Activated CD4-positive, alpha-beta T cell treated with anti-CD3 and anti-CD28 coated beads, Interleukin-2, amount 10 ng/mL, durations not matched to agents 24 days and 14 days (primary cell): ENCODE measurements at regions of chr1 and their contacts with region 1.

Region 1: GRCh38 chr1:221435504-221435904 is 306.4 kb downstream of the DUSP10 start:
- DNase-seq: peak; percentile 67
- H3K4me3 Mint-ChIP-seq: no peak overlapping the region
- H3K27ac Mint-ChIP-seq: no peak overlapping the region
- H3K4me1 Mint-ChIP-seq: peaks cover 22% of the 10 kb centered on the region
- H3K27me3 Mint-ChIP-seq: peaks cover 11% of the 10 kb centered on the region

Region 2: GRCh38 chr1:220810179-220810653 is 625.3 kb before region 1 on chr1:
- intact Hi-C with region 1: loop called (anchors 1 kb)
- DNase-seq: peak; percentile 89
- H3K4me3 Mint-ChIP-seq: peak overlapping the region; percentile 61
- H3K27ac Mint-ChIP-seq: no peak overlapping the region
- H3K4me1 Mint-ChIP-seq: peaks cover 4% of the 10 kb centered on the region
- H3K27me3 Mint-ChIP-seq: no peaks in the 10 kb centered on the region

Region 3: GRCh38 chr1:220879076-220879508 is 556.4 kb before region 1 on chr1 and contains the start of gene HLX:
- intact Hi-C with region 1: loop called (anchors 2 kb)
- DNase-seq: peak; percentile 81
- H3K4me3 Mint-ChIP-seq: peak within 1 kb of the TSS; percentile 90
- H3K27ac Mint-ChIP-seq: peak within 1 kb of the TSS; percentile 88
- H3K4me1 Mint-ChIP-seq: peaks cover 26% of the 10 kb centered on the region
- H3K27me3 Mint-ChIP-seq: peaks cover 74% of the 10 kb centered on the region
- total RNA-seq, gene HLX: 5.7 and 7.2 TPM in 2 replicates

Region 4: GRCh38 chr1:221263831-221264767 is 171.4 kb before region 1 on chr1:
- intact Hi-C with region 1: loop called (anchors 2 kb)
- DNase-seq: peak; percentile 79
- H3K4me3 Mint-ChIP-seq: no peak overlapping the region
- H3K27ac Mint-ChIP-seq: no peak overlapping the region
- H3K4me1 Mint-ChIP-seq: no peaks in the 10 kb centered on the region
- H3K27me3 Mint-ChIP-seq: peaks cover 2% of the 10 kb centered on the region

Region 5: GRCh38 chr1:221517961-221518360 is 82.5 kb after region 1 on chr1:
- intact Hi-C with region 1: no loop called
- DNase-seq: peak; percentile 11
- H3K4me3 Mint-ChIP-seq: no peak overlapping the region
- H3K27ac Mint-ChIP-seq: no peak overlapping the region
- H3K4me1 Mint-ChIP-seq: peaks cover 7% of the 10 kb centered on the region
- H3K27me3 Mint-ChIP-seq: peaks cover 4% of the 10 kb centered on the region

Region 6: DNA sequence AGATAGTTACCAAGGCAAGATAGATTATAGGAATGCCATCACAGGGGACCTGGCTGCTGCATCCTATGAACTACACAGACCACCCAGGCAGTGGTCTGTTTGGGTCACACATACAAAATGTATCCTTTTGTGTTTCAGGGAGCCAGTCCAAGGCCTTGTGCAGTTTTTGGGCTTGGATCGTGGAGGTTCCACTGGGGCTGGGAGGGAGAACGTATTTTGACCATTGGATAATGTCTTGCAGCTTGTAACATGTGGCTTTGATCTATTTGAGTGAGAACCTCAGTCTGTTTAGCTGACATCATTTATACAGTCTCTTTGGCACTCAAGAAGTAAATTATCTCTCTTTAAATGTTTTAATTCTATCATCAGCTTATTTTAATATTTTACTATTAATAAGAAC is 159.1 kb after region 1 on chr1:
- intact Hi-C with region 1: no loop called
- DNase-seq: no peak
- H3K4me3 Mint-ChIP-seq: no peak overlapping the region
- H3K27ac Mint-ChIP-seq: no peak overlapping the region
- H3K4me1 Mint-ChIP-seq: no peaks in the 10 kb centered on the region
- H3K27me3 Mint-ChIP-seq: peaks cover 1% of the 10 kb centered on the region

Region 7: DNA sequence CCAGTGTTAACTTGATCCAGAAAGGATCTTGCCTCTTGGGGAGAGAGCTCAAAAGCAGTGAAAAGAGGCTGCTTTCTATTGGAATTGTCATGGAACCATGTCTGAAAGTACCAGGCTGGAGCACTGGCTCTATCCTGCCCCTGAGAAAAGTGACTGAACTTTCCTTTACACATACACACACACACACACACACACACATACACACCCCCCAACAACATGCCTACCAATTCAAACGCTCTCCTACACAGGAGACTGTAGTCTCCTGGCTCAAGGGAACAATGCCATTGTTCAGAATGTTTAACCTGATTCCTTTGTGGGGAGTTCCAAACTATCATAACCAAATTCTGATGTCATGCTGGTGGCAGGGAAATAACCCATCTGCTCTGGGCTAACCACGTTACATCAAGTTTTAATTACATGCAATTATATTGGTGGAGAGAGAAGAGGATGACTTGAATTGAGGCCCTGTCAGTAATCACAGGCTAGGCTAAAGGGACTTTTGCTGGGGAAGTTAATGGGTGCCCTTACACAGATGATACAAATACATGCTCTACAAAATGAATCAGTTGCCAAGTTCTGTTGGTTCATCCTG is 358.7 kb after region 1 on chr1:
- intact Hi-C with region 1: loop called (anchors 5 kb)
- DNase-seq: peak; percentile 77
- H3K4me3 Mint-ChIP-seq: peak overlapping the region; percentile 45
- H3K27ac Mint-ChIP-seq: peak overlapping the region; percentile 90
- H3K4me1 Mint-ChIP-seq: peaks cover 36% of the 10 kb centered on the region
- H3K27me3 Mint-ChIP-seq: no peaks in the 10 kb centered on the region

Region 8: DNA sequence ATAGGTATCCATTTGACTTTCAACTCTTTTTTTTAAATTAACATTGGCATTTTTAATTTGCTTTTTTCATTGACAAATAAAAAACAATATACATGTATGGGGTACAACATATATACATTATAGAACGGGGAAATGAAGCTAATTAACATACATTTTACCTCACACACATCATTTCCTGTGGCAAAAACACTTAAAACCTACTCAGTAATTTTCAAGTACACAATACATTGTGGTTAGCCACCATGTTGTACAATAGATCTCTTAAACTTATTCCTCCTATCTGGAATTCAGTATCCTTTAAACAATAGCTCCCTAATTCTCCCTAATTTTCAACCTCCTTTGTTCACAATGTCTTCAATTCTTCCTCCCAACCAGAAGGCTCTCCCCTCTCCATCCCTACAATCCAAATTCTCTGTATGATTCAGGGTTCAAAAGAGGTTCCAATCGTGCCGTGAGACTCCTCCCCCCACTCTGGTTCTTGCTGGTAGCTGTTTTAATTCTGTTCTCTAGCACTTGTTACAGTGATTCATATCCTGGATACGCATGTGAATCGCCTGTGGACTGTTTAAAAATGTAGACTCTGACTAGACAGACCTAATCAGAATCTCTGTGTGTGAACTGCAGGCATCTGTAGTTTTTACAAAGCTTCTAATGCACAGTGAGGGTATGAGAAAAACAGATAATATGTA is 394.0 kb after region 1 on chr1:
- intact Hi-C with region 1: loop called (anchors 5 kb)
- DNase-seq: peak; percentile 84
- H3K4me3 Mint-ChIP-seq: peak overlapping the region; percentile 73
- H3K27ac Mint-ChIP-seq: peak overlapping the region; percentile 90
- H3K4me1 Mint-ChIP-seq: peaks cover 67% of the 10 kb centered on the region
- H3K27me3 Mint-ChIP-seq: no peaks in the 10 kb centered on the region

Region 9: DNA sequence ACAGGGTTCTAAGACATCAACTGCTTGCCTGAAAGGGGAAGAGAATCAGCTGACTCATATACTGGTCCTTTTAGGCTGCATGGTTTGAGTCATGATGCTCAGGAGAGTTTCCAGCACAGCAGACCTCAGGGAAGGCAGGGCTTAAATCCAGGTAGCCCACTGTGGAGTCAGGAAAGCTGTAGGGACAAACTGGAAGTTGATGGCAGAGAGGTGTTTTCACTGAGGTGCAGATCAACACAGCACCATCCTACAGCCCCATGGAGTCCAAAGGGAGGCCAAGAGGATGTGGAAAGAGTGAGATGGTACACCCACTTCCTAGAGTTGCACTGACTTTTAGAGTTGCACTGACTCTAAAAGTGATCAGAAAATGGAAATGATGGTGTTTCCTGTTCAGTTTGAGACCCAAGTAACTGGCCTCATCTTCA is 558.8 kb after region 1 on chr1:
- intact Hi-C with region 1: loop called (anchors 10 kb)
- DNase-seq: peak; percentile 65
- H3K4me3 Mint-ChIP-seq: peak overlapping the region; percentile 23
- H3K27ac Mint-ChIP-seq: peak overlapping the region; percentile 92
- H3K4me1 Mint-ChIP-seq: peaks cover 26% of the 10 kb centered on the region
- H3K27me3 Mint-ChIP-seq: no peaks in the 10 kb centered on the region